IMR-90 (cell line): ENCODE measurements at regions of chr13 and their contacts with region 1.

Region 1: GRCh38 chr13:82220641-82221040 is 1661.6 kb downstream of the SLITRK1 start:
- DNase-seq: no peak
- ATAC-seq: no peak
- H3K4me3 ChIP-seq: no peak overlapping the region
- H3K27ac ChIP-seq: no peak overlapping the region
- H3K4me1 ChIP-seq: no peaks in the 10 kb centered on the region
- H3K27me3 ChIP-seq: no peaks in the 10 kb centered on the region
- CTCF ChIP-seq: no peak
- POLR2A ChIP-seq: no peak
- RAD21 ChIP-seq: no peak

Region 2: GRCh38 chr13:81350056-81350455 is 870.6 kb before region 1 on chr13:
- CTCF ChIA-PET with region 1: no interaction called
- POLR2A ChIA-PET with region 1: interaction called, 12 read pairs
- dilution Hi-C with region 1: no loop called
- in situ Hi-C with region 1: no loop called
- intact Hi-C with region 1: no loop called
- DNase-seq: no peak
- ATAC-seq: no peak
- H3K4me3 ChIP-seq: no peak overlapping the region
- H3K27ac ChIP-seq: no peak overlapping the region
- H3K4me1 ChIP-seq: no peaks in the 10 kb centered on the region
- H3K27me3 ChIP-seq: no peaks in the 10 kb centered on the region
- CTCF ChIP-seq: no peak
- POLR2A ChIP-seq: no peak
- RAD21 ChIP-seq: no peak